GM12878 (cell line): ENCODE measurements at regions of chr19 and their contacts with region 1.

Region 1: GRCh38 chr19:262125-262524 is 29.1 kb downstream of the PLPP2 start:
- DNase-seq: no peak
- ATAC-seq: peak; percentile 78
- H3K4me3 ChIP-seq: no peak overlapping the region
- H3K27ac ChIP-seq: 0 out of 2 replicates have a peak overlapping the region, but pooled peaks have one; percentile 24
- H3K4me1 ChIP-seq: no peaks in the 10 kb centered on the region
- H3K27me3 ChIP-seq: no peaks in the 10 kb centered on the region
- CTCF ChIP-seq: no peak
- EP300 ChIP-seq: no peak
- POLR2A ChIP-seq: no peak
- RAD21 ChIP-seq: no peak

Region 2: GRCh38 chr19:246541-246940 is 15.6 kb before region 1 on chr19:
- CTCF ChIA-PET with region 1: interaction called, 16 read pairs
- POLR2A ChIA-PET with region 1: no interaction called
- RAD21 ChIA-PET with region 1: interaction called, 6 read pairs
- SMC1A ChIA-PET with region 1: interaction called, 3 read pairs
- in situ Hi-C with region 1: no loop called
- intact Hi-C with region 1: no loop called
- DNase-seq: no peak
- ATAC-seq: no peak
- H3K4me3 ChIP-seq: no peak overlapping the region
- H3K27ac ChIP-seq: no peak overlapping the region
- H3K4me1 ChIP-seq: no peaks in the 10 kb centered on the region
- H3K27me3 ChIP-seq: no peaks in the 10 kb centered on the region
- CTCF ChIP-seq: no peak
- EP300 ChIP-seq: no peak
- POLR2A ChIP-seq: no peak
- RAD21 ChIP-seq: no peak

Region 3: GRCh38 chr19:289651-290371 is 27.7 kb after region 1 on chr19:
- CTCF ChIA-PET with region 1: no interaction called
- POLR2A ChIA-PET with region 1: no interaction called
- RAD21 ChIA-PET with region 1: no interaction called
- SMC1A ChIA-PET with region 1: no interaction called
- in situ Hi-C with region 1: no loop called
- intact Hi-C with region 1: no loop called
- DNase-seq: no peak
- ATAC-seq: peak; percentile 44
- H3K4me3 ChIP-seq: no peak overlapping the region
- H3K27ac ChIP-seq: no peak overlapping the region
- H3K4me1 ChIP-seq: no peaks in the 10 kb centered on the region
- H3K27me3 ChIP-seq: peaks cover 0 to 5% of the 10 kb centered on the region in 2 experiments; a peak in 2 of 4 replicates
- CTCF ChIP-seq: no peak
- EP300 ChIP-seq: no peak
- POLR2A ChIP-seq: no peak
- RAD21 ChIP-seq: no peak

Region 4: DNA sequence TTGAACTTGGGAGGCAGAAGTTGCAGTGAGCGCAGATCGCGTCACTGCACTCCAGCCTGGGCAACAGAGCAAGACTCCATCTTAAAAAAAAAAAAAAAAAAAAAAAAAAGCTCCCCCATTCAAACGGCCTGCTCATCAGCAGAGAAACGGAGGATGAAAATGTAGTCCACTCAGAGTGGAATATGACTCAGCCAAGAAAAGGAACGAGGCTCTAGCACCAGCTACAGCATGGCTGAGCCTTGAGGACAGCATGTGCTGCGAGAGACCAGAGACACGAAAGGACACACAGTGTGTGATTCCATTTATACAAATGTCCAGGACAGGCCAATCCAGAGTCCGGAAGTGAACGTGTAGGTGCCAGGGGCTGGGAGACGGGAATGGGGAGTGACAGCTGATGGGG is 100.6 kb after region 1 on chr19:
- CTCF ChIA-PET with region 1: no interaction called
- POLR2A ChIA-PET with region 1: interaction called, 12 read pairs
- RAD21 ChIA-PET with region 1: no interaction called
- SMC1A ChIA-PET with region 1: no interaction called
- in situ Hi-C with region 1: no loop called
- intact Hi-C with region 1: no loop called
- DNase-seq: no peak
- ATAC-seq: no peak
- H3K4me3 ChIP-seq: no peak overlapping the region
- H3K27ac ChIP-seq: no peak overlapping the region
- H3K4me1 ChIP-seq: no peaks in the 10 kb centered on the region
- H3K27me3 ChIP-seq: no peaks in the 10 kb centered on the region
- CTCF ChIP-seq: no peak
- EP300 ChIP-seq: no peak
- POLR2A ChIP-seq: no peak
- RAD21 ChIP-seq: no peak

Region 5: GRCh38 chr19:383922-384798 is 122.0 kb after region 1 on chr19:
- CTCF ChIA-PET with region 1: no interaction called
- POLR2A ChIA-PET with region 1: no interaction called
- RAD21 ChIA-PET with region 1: no interaction called
- SMC1A ChIA-PET with region 1: no interaction called
- in situ Hi-C with region 1: no loop called
- intact Hi-C with region 1: no loop called
- DNase-seq: peak; percentile 27
- ATAC-seq: peak; percentile 76
- H3K4me3 ChIP-seq: no peak overlapping the region
- H3K27ac ChIP-seq: no peak overlapping the region
- H3K4me1 ChIP-seq: peaks cover 20% of the 10 kb centered on the region
- H3K27me3 ChIP-seq: no peaks in the 10 kb centered on the region
- CTCF ChIP-seq: peak; percentile 6 to 31 (median 20); a peak in 1 of 6 replicates
- EP300 ChIP-seq: no peak
- POLR2A ChIP-seq: no peak
- RAD21 ChIP-seq: peak; percentile 39; the same call in 1 of the 2 replicates